Activated CD8-positive, alpha-beta memory T cell treated with anti-CD3 and anti-CD28 coated beads, Interleukin-2, amount 10 ng/mL, durations not matched to agents 7 days and 5 days (primary cell): ENCODE measurements at regions of chr10 and their contacts with region 1.

Region 1: DNA sequence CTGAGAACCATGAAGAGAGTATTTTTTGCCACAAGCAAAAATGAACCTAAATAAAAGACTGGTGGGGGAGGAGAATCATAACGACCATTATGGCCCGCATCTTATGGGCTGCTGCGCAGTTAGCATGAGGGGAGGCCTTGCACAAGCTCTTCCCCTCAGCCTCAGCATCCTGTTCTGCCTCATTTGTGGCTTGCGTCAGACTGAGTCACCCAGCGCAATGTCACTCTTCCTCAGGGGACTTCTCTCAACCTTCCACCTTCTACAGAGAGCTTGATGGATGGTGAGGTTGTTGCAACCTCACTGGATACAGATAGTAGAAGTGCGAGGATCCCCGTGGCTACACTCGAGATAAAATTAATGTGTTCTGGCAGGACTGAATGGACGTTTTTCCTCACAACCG is 16.8 kb upstream of the GPR15LG start:
- DNase-seq: peak; percentile 80
- ATAC-seq: peak; percentile 99
- H3K4me3 Mint-ChIP-seq: peak overlapping the region; percentile 3
- H3K27ac Mint-ChIP-seq: peak overlapping the region; percentile 73
- H3K4me1 Mint-ChIP-seq: peaks cover 33% of the 10 kb centered on the region
- H3K27me3 Mint-ChIP-seq: peaks cover 2% of the 10 kb centered on the region

Region 2: DNA sequence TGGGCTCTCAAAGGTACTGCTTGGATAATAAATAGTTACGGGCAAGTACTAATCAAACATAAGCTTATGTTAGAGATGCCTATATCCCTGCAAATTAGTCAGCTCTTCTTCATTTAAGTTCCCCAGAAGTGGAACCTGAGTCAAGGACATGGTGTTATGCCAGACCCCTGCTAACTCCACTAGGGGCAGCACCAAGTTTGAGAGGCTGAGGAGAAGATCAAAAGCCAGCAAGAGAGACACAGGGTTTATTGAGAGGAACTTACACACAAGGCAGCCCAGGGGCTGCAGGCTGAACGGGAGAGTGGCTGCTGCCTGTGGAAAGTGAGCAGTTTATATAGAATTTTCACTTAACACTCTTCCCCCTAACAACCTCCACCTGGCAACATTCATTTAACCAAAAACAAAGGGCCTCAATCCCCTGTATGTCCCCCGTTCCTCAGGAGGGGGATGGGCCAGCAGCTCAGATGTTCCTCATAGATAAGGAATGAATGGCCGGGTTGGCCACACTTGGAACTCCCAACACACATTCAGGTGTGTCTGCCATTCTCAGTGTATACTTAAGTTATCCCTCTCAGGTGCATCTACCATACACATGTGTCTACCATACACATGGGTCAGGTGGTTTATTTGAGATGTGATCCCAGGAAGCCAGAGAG is 80.1 kb before region 1 on chr10:
- CTCF ChIA-PET with region 1: no interaction called
- DNase-seq: no peak
- ATAC-seq: no peak
- H3K4me3 Mint-ChIP-seq: no peak overlapping the region
- H3K27ac Mint-ChIP-seq: no peak overlapping the region
- H3K4me1 Mint-ChIP-seq: no peaks in the 10 kb centered on the region
- H3K27me3 Mint-ChIP-seq: peaks cover 7% of the 10 kb centered on the region

Region 3: GRCh38 chr10:84126785-84127167 is 30.0 kb before region 1 on chr10:
- CTCF ChIA-PET with region 1: no interaction called
- DNase-seq: no peak
- ATAC-seq: no peak
- H3K4me3 Mint-ChIP-seq: no peak overlapping the region
- H3K27ac Mint-ChIP-seq: no peak overlapping the region
- H3K4me1 Mint-ChIP-seq: no peaks in the 10 kb centered on the region
- H3K27me3 Mint-ChIP-seq: peaks cover 20% of the 10 kb centered on the region

Region 4: GRCh38 chr10:84205049-84205852 is 48.5 kb after region 1 on chr10:
- CTCF ChIA-PET with region 1: interaction called, 12 read pairs
- DNase-seq: peak; percentile 79
- ATAC-seq: peak; percentile 88
- H3K4me3 Mint-ChIP-seq: no peak overlapping the region
- H3K27ac Mint-ChIP-seq: no peak overlapping the region
- H3K4me1 Mint-ChIP-seq: no peaks in the 10 kb centered on the region
- H3K27me3 Mint-ChIP-seq: peaks cover 11% of the 10 kb centered on the region